Posterior vena cava (tissue), 2 donors: ENCODE measurements at regions of chr22 and their contacts with region 1.

Region 1: GRCh38 chr22:44080936-44081861 is 57.1 kb downstream of the PARVB start:
- DNase-seq: peak; percentile 93

Region 2: DNA sequence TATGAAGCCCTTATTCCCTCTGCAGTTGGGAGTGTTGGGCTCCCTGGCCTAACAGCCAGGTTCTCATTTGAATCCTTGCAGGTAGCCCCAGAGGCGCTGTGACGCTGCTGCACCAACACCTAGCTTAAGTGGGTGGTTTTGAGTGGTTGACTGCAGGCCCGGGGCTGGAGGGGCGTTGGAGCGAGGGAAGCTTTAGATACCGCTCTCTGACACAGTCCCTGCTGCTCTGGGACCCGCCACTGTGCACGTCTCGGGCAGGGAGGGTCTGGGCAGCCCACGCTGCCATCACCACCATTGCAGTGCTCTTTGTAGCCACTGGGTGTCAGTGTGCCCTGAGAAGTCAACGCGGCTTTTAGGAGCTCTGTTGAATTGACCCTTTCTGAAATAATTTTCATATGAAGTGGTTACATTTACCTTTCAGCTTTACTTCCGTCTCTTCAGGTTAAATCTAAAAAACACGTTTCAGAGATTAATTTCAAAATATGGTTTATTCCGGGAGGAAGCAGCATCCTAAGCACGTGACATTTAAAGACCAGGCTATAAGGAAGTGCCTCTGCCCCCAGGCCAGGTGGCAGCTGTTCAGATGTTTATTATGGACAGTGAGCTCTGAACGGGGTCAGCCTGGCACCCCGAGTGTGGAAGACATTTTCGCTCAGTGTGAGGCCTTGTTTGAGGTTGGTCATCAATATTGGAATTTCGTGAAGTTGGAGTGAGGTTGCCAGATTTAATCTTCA is 88.0 kb before region 1 on chr22:
- intact Hi-C with region 1: loop called in 1 of 2 experiments (anchors 10 kb)
- DNase-seq: no peak

Region 3: GRCh38 chr22:44337678-44338004 is 256.4 kb after region 1 on chr22:
- intact Hi-C with region 1: loop called in 1 of 2 experiments (anchors 10 kb)
- DNase-seq: no peak

Region 4: DNA sequence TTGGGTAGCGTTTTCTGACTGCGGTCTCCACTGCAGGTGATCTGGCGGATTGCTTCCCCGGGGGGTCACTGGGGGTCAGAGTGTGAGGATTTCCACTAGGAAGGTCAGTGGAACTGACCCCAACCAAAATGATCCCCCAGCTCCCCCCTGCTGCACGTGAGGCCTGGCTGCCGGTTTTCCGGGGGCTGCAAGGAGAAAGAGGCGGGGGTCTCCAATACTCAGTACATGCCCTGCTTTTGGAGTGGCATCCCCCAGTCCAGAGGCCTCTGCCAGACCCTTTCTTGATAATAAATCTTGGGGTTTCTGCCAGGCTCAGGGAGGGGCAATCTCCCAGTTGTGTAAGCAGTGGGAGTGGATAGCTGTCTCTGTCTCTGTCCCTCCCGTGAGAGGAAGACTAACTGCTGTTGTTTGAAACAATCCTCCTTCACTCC is 488.4 kb after region 1 on chr22:
- intact Hi-C with region 1: loop called in 1 of 2 experiments (anchors 1 kb)
- DNase-seq: no peak

Region 5: GRCh38 chr22:44625981-44626687 is 544.9 kb after region 1 on chr22:
- intact Hi-C with region 1: loop called (anchors 5 kb)
- DNase-seq: peak; percentile 89